ENCODE measurements at regions of chrX and their contacts with region 1.

Region 1: DNA sequence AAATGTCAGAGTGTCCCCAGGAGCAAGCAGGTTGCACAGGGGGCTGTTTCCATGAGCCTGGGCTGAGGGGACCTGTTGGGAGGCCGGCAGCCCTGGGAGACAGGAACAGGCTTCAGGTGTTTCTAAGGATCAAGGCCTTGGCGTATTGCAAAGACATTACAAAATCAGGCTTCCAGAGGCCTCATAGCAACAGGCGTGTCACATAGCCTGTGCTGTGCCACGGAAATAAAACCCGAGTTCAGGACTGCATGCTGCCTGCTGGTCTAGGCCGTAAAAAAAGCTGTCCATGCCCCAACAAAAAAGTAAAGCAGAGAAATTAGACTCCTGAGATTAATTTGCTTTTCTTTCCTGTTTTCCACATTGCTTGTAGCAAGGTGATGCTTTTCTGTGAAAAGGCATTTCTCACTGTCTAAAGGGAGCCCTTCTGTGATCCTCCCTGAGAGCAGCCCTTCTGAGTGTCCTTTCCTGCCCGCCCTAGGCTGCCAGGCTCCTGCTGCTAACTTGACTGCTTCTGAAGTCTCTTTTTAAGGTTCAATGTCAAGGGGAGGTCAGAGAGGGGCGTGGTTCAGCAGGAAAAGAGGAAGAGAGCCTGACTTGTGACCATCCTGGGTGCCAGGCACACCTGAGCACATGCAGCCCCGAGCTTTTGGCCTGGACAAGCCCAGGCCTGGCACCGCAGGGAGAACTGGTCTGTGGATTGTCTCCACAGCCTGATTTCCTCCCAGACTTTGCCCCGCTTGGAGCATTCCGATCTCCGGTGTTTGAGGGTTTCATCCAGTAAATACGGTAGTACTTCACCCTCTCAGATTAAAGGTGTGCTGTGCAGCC is 21.3 kb downstream of the SHROOM2 start:
- DNase-seq: peak; percentile 26
- H3K4me3 ChIP-seq: no peak overlapping the region
- H3K27ac ChIP-seq: peak overlapping the region in 3 of 4 donors; percentile 22 to 47 (median 37)
- H3K4me1 ChIP-seq: no peaks in the 10 kb centered on the region
- H3K27me3 ChIP-seq: no peaks in the 10 kb centered on the region
- CTCF ChIP-seq: no peak
- EP300 ChIP-seq: no peak
- POLR2A ChIP-seq: no peak

Region 2: DNA sequence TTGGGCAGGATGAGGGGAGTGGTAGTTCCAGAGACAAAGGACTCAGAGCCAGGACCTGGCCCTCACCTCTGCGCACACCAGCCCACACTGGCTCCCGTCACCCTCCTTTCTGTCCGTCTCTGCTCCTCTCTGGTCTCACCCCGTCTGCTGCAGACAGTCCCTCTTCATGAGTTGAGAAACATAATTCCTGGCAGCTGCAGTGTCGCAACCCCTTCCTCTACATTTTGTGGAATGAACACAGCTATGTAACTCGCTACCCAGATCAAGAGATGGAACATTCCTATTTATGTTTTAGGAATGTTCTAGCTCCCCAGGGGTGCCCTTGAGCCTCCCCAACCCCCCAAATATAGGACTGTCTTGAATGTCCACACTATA is 38.0 kb after region 1 on chrX:
- in situ Hi-C with region 1: no loop called
- intact Hi-C with region 1: loop called (anchors 1 kb)
- DNase-seq: no peak
- H3K4me3 ChIP-seq: no peak overlapping the region
- H3K27ac ChIP-seq: no peak overlapping the region
- H3K4me1 ChIP-seq: peaks cover 0 to 7% (median 0%) of the 10 kb centered on the region in 4 donors
- H3K27me3 ChIP-seq: no peaks in the 10 kb centered on the region
- CTCF ChIP-seq: no peak
- EP300 ChIP-seq: no peak
- POLR2A ChIP-seq: no peak

Region 3: DNA sequence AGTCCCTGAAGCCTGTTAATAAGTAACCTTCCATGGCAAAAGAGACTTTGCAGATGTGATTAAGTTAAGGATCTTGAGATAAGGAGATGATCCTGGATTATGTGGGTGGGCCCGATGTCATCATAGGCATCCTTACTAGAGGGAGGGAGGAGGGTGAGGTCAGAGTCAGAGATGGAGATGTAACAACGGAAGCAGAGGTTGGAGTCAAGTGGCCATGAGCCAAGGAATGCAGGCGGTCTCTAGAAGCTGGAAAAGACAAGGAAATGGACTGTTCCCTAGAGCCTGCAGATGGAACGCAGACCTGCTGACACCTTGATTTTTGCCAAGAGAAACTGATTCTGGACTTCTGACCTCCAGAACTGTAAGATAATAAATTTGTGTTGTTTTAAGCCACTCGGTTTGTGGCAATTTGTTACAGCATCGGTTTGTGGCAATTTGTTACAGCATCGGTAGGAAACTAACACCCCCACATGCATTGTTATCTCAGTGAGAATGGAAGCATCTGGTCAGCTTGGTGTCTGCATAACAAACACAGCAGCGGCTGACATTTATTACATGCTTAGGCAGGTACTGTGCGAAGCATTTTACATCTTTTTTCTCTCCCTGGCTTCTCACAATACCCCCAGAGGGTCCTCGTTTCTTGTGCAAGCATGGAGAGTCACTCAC is 215.1 kb after region 1 on chrX:
- in situ Hi-C with region 1: no loop called
- intact Hi-C with region 1: no loop called
- DNase-seq: peak; percentile 37
- H3K4me3 ChIP-seq: no peak overlapping the region
- H3K27ac ChIP-seq: no peak overlapping the region
- H3K4me1 ChIP-seq: peaks cover 0 to 24% (median 10%) of the 10 kb centered on the region in 4 donors
- H3K27me3 ChIP-seq: no peaks in the 10 kb centered on the region
- CTCF ChIP-seq: no peak
- EP300 ChIP-seq: no peak
- POLR2A ChIP-seq: no peak